ENCODE measurements at regions of chr20 and their contacts with region 1.

Region 1: DNA sequence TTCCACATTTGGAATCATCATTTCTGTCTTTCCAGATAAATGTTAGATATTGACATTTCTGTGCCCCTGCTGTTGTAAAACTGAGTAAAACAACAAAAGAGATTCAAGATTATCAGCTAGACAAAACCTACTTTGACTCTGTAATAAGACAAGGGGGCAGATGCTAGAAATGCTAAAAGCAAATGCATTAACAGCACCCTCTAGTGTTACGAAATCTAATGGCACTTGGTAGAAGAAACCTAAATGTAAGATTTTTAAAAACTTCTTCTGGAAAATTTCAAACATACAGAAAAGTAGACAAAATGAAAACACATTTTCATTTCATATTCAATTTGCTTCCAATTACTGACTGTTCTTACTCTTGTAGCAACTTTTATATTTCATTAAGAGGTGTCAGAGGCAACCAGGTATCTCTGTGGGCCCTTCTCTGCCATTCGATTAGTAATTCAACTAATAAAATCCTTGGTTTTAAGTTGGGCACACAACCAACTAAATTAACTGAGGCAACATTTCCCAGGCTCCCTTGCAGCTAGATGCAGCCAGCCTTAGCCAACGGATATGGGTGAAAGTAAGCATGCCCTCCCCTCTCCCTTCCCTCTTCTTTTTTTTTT is 45.0 kb downstream of the SLC23A2 start:
- DNase-seq: no peak
- ATAC-seq: peak; percentile 75
- H3K4me3 ChIP-seq: no peak overlapping the region
- H3K27ac ChIP-seq: no peak overlapping the region
- H3K4me1 ChIP-seq: peaks cover 9% of the 10 kb centered on the region
- H3K27me3 ChIP-seq: no peaks in the 10 kb centered on the region
- CTCF ChIP-seq: peak; percentile 66 to 84 (median 82)
- EP300 ChIP-seq: no peak
- POLR2A ChIP-seq: no peak
- RAD21 ChIP-seq: peak; percentile 88

Region 2: GRCh38 chr20:4740774-4741431 is 215.4 kb before region 1 on chr20:
- CTCF ChIA-PET with region 1: interaction called, 18 read pairs
- POLR2A ChIA-PET with region 1: no interaction called
- RAD21 ChIA-PET with region 1: interaction called, 4 read pairs
- SMC1A ChIA-PET with region 1: interaction called, 6 read pairs
- in situ Hi-C with region 1: no loop called
- intact Hi-C with region 1: no loop called
- DNase-seq: no peak
- ATAC-seq: peak; percentile 83
- H3K4me3 ChIP-seq: no peak overlapping the region
- H3K27ac ChIP-seq: no peak overlapping the region
- H3K4me1 ChIP-seq: no peaks in the 10 kb centered on the region
- H3K27me3 ChIP-seq: no peaks in the 10 kb centered on the region; a peak in 2 of 4 replicates
- CTCF ChIP-seq: peak; percentile 70 to 86 (median 79)
- EP300 ChIP-seq: no peak
- POLR2A ChIP-seq: no peak
- RAD21 ChIP-seq: peak; percentile 50

Region 3: GRCh38 chr20:4869290-4870193 is 86.8 kb before region 1 on chr20:
- CTCF ChIA-PET with region 1: interaction called, 3 read pairs
- POLR2A ChIA-PET with region 1: no interaction called
- RAD21 ChIA-PET with region 1: no interaction called
- SMC1A ChIA-PET with region 1: no interaction called
- in situ Hi-C with region 1: no loop called
- intact Hi-C with region 1: loop called (anchors 10 kb)
- DNase-seq: no peak
- ATAC-seq: no peak
- H3K4me3 ChIP-seq: no peak overlapping the region
- H3K27ac ChIP-seq: no peak overlapping the region
- H3K4me1 ChIP-seq: no peaks in the 10 kb centered on the region
- H3K27me3 ChIP-seq: no peaks in the 10 kb centered on the region
- CTCF ChIP-seq: no peak
- EP300 ChIP-seq: no peak
- POLR2A ChIP-seq: no peak
- RAD21 ChIP-seq: no peak

Region 4: DNA sequence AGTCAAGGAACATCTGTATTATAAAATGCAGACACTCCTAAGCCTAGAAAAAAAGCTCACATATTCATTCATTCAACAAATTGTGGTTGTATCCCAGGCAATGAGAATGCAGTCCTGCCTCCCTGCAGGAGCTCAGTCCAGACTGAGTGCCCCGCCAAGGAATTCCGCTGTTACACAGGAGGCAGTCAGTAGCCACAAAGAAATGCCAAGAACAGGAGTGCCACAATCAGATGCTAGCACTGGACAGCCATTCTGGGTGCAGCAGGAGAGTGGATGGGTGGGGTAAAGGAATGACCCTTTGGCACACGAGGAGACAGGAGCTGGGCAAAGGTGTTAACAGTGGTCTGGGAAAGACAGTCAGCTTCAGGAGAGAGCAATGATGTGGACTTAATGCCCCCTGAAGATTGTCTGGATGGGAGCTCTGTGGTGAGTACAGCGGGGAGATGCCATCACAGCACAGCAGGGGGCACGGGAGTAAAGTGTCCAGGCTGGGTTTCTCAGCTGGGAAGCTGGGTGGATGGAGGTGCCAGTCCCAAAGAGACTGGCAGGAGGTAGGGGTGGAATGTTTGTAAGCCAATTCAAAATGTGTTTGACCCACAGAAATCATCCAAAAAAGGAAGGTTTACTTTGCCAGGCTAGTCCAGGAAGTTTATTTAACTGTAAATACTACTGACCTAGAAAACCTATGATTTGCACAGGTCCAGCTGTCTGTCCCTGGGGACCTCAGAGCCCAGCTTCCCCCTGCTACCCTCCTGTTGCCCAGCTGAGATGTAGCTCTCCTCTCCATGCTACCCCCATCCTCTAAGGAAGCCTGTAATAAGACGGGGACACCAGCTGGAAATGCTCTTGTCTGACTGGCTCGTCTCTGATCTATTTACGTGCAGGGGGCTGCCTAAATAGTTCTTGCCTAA is 39.1 kb before region 1 on chr20:
- CTCF ChIA-PET with region 1: interaction called, 4 read pairs
- POLR2A ChIA-PET with region 1: no interaction called
- RAD21 ChIA-PET with region 1: interaction called, 4 read pairs
- SMC1A ChIA-PET with region 1: interaction called, 10 read pairs
- in situ Hi-C with region 1: no loop called
- intact Hi-C with region 1: no loop called
- DNase-seq: no peak
- ATAC-seq: no peak
- H3K4me3 ChIP-seq: no peak overlapping the region
- H3K27ac ChIP-seq: no peak overlapping the region
- H3K4me1 ChIP-seq: no peaks in the 10 kb centered on the region
- H3K27me3 ChIP-seq: no peaks in the 10 kb centered on the region
- CTCF ChIP-seq: no peak
- EP300 ChIP-seq: no peak
- POLR2A ChIP-seq: no peak
- RAD21 ChIP-seq: no peak

Region 5: GRCh38 chr20:4966826-4967751 is 10.8 kb after region 1 on chr20:
- CTCF ChIA-PET with region 1: interaction called, 26 read pairs
- POLR2A ChIA-PET with region 1: interaction called, 3 read pairs
- RAD21 ChIA-PET with region 1: interaction called, 6 read pairs
- SMC1A ChIA-PET with region 1: interaction called, 13 read pairs
- in situ Hi-C with region 1: no loop called
- intact Hi-C with region 1: no loop called
- DNase-seq: no peak
- ATAC-seq: no peak
- H3K4me3 ChIP-seq: no peak overlapping the region
- H3K27ac ChIP-seq: no peak overlapping the region
- H3K4me1 ChIP-seq: peaks cover 4% of the 10 kb centered on the region
- H3K27me3 ChIP-seq: no peaks in the 10 kb centered on the region
- CTCF ChIP-seq: no peak
- EP300 ChIP-seq: no peak
- POLR2A ChIP-seq: no peak
- RAD21 ChIP-seq: no peak

Region 6: GRCh38 chr20:5001174-5002076 is 45.1 kb after region 1 on chr20 and contains the start of gene SLC23A2:
- CTCF ChIA-PET with region 1: interaction called, 16 read pairs
- POLR2A ChIA-PET with region 1: interaction called, 6 read pairs
- RAD21 ChIA-PET with region 1: interaction called, 5 read pairs
- SMC1A ChIA-PET with region 1: interaction called, 6 read pairs
- in situ Hi-C with region 1: no loop called
- intact Hi-C with region 1: no loop called
- DNase-seq: no peak
- ATAC-seq: peak; percentile 59
- H3K4me3 ChIP-seq: peak within 1 kb of the TSS; percentile 94
- H3K27ac ChIP-seq: no peak within 1 kb of the TSS
- H3K4me1 ChIP-seq: peaks cover 11% of the 10 kb centered on the region
- H3K27me3 ChIP-seq: no peaks in the 10 kb centered on the region; a peak in 1 of 4 replicates
- CTCF ChIP-seq: no peak
- EP300 ChIP-seq: no peak
- POLR2A ChIP-seq: peak; percentile 68
- RAD21 ChIP-seq: no peak
- polyA plus RNA-seq, gene SLC23A2: 4.4 to 5.9 TPM

Region 7: GRCh38 chr20:5674176-5674660 is 717.9 kb after region 1 on chr20:
- CTCF ChIA-PET with region 1: no interaction called
- POLR2A ChIA-PET with region 1: no interaction called
- RAD21 ChIA-PET with region 1: no interaction called
- SMC1A ChIA-PET with region 1: no interaction called
- in situ Hi-C with region 1: no loop called
- intact Hi-C with region 1: no loop called
- DNase-seq: peak; percentile 94
- ATAC-seq: peak; percentile 97
- H3K4me3 ChIP-seq: no peak overlapping the region
- H3K27ac ChIP-seq: no peak overlapping the region
- H3K4me1 ChIP-seq: peaks cover 21% of the 10 kb centered on the region
- H3K27me3 ChIP-seq: no peaks in the 10 kb centered on the region
- CTCF ChIP-seq: no peak
- EP300 ChIP-seq: no peak
- POLR2A ChIP-seq: no peak
- RAD21 ChIP-seq: no peak

Measured in GM12878 (cell line).